IMR-90 (cell line): ENCODE measurements at regions of chr2 and their contacts with region 1.

Region 1: GRCh38 chr2:157857881-157858280 is 18.2 kb downstream of the ACVR1 start:
- DNase-seq: peak; percentile 18
- ATAC-seq: no peak
- H3K4me3 ChIP-seq: no peak overlapping the region
- H3K27ac ChIP-seq: no peak overlapping the region
- H3K4me1 ChIP-seq: peaks cover 7% of the 10 kb centered on the region
- H3K27me3 ChIP-seq: no peaks in the 10 kb centered on the region
- CTCF ChIP-seq: no peak
- POLR2A ChIP-seq: no peak
- RAD21 ChIP-seq: no peak

Region 2: GRCh38 chr2:157245846-157246764 is 611.8 kb before region 1 on chr2:
- CTCF ChIA-PET with region 1: no interaction called
- POLR2A ChIA-PET with region 1: no interaction called
- dilution Hi-C with region 1: no loop called
- in situ Hi-C with region 1: no loop called
- intact Hi-C with region 1: loop called (anchors 10 kb)
- DNase-seq: peak; percentile 93
- ATAC-seq: peak; percentile 86
- H3K4me3 ChIP-seq: no peak overlapping the region
- H3K27ac ChIP-seq: peak overlapping the region; percentile 99
- H3K4me1 ChIP-seq: peaks cover 17% of the 10 kb centered on the region
- H3K27me3 ChIP-seq: no peaks in the 10 kb centered on the region
- CTCF ChIP-seq: no peak
- POLR2A ChIP-seq: no peak
- RAD21 ChIP-seq: no peak

Region 3: GRCh38 chr2:157302492-157303099 is 555.3 kb before region 1 on chr2:
- CTCF ChIA-PET with region 1: no interaction called
- POLR2A ChIA-PET with region 1: no interaction called
- dilution Hi-C with region 1: no loop called
- in situ Hi-C with region 1: no loop called
- intact Hi-C with region 1: no loop called
- DNase-seq: peak; percentile 44
- ATAC-seq: peak; percentile 59
- H3K4me3 ChIP-seq: no peak overlapping the region
- H3K27ac ChIP-seq: no peak overlapping the region
- H3K4me1 ChIP-seq: peaks cover 4% of the 10 kb centered on the region; the same call in 1 of the 2 replicates
- H3K27me3 ChIP-seq: no peaks in the 10 kb centered on the region
- CTCF ChIP-seq: peak; percentile 70
- POLR2A ChIP-seq: no peak
- RAD21 ChIP-seq: peak; percentile 67

Region 4: GRCh38 chr2:157838442-157839161 is 19.3 kb before region 1 on chr2:
- CTCF ChIA-PET with region 1: no interaction called
- POLR2A ChIA-PET with region 1: interaction called, 3 read pairs
- dilution Hi-C with region 1: no loop called
- in situ Hi-C with region 1: no loop called
- intact Hi-C with region 1: loop called (anchors 2 kb)
- DNase-seq: peak; percentile 90
- ATAC-seq: peak; percentile 85
- H3K4me3 ChIP-seq: no peak overlapping the region
- H3K27ac ChIP-seq: peak overlapping the region; percentile 64; the same call in 1 of the 2 replicates
- H3K4me1 ChIP-seq: peaks cover 23% of the 10 kb centered on the region
- H3K27me3 ChIP-seq: no peaks in the 10 kb centered on the region
- CTCF ChIP-seq: no peak
- POLR2A ChIP-seq: no peak; the same call in 1 of the 2 replicates
- RAD21 ChIP-seq: no peak

Region 5: DNA sequence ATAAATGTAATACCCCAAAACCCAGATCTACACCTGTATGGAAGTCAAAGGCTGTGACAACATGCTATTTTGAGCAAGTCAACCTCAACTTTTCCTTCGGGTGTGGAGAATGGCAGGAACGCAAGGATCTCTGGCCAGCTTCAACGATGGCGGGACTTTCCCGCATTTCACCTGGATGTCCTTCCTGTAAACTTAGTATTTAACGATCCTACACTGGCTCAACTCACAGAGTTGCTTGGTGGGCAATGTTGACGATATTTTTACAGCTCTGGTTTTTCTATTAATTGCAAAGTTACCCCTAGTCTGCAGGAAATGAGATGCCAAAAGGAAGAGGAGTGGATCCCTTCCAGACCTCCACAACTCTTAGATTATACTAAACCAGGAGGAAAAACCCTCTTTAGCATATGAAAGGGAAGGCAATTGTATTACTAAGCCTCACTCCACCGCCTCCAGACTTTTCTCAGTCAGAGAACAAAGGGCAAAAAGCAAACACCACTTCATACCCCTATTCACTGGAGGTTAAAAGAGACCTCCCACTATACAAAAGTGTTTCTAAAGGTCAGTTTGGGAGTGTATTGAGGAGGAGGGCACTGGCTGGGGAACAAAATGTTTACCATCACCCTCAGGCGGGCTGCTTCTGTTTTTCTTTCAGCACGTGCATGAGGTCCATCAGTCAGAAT is 74.7 kb after region 1 on chr2:
- CTCF ChIA-PET with region 1: no interaction called
- POLR2A ChIA-PET with region 1: no interaction called
- dilution Hi-C with region 1: no loop called
- in situ Hi-C with region 1: no loop called
- intact Hi-C with region 1: no loop called
- DNase-seq: no peak
- ATAC-seq: no peak
- H3K4me3 ChIP-seq: no peak overlapping the region
- H3K27ac ChIP-seq: no peak overlapping the region
- H3K4me1 ChIP-seq: no peaks in the 10 kb centered on the region
- H3K27me3 ChIP-seq: peaks cover 5% of the 10 kb centered on the region
- CTCF ChIP-seq: no peak
- POLR2A ChIP-seq: no peak
- RAD21 ChIP-seq: no peak